Naive thymus-derived CD4-positive, alpha-beta T cell (primary cell): ENCODE measurements at regions of chr13 and their contacts with region 1.

Region 1: GRCh38 chr13:29935309-29935981 is 85.0 kb upstream of the UBL3 start:
- DNase-seq: peak; percentile 38 to 84 (median 77)
- ATAC-seq: peak; percentile 93
- H3K4me3 ChIP-seq: peak overlapping the region; percentile 61
- H3K4me3 Mint-ChIP-seq: peak overlapping the region; percentile 67 to 95 (median 91)
- H3K27ac ChIP-seq: peak overlapping the region; percentile 71
- H3K27ac Mint-ChIP-seq: peak overlapping the region; percentile 81 to 96 (median 93)
- H3K4me1 ChIP-seq: peaks cover 38 to 43% of the 10 kb centered on the region in 2 donors
- H3K4me1 Mint-ChIP-seq: peaks cover 32 to 53% (median 51%) of the 10 kb centered on the region in 7 donors
- H3K27me3 ChIP-seq: no peaks in the 10 kb centered on the region
- H3K27me3 Mint-ChIP-seq: no peaks in the 10 kb centered on the region

Region 2: GRCh38 chr13:29508130-29508875 is 427.1 kb before region 1 on chr13:
- CTCF ChIA-PET with region 1: no interaction called
- POLR2A ChIA-PET with region 1: no interaction called
- intact Hi-C with region 1: loop called in 1 of 2 experiments (anchors 5 kb)
- DNase-seq: peak; percentile 32 to 74 (median 61)
- ATAC-seq: peak; percentile 76
- H3K4me3 ChIP-seq: no peak overlapping the region
- H3K4me3 Mint-ChIP-seq: no peak overlapping the region
- H3K27ac ChIP-seq: no peak overlapping the region
- H3K27ac Mint-ChIP-seq: peak overlapping the region in 1 of 9 donors; percentile 21
- H3K4me1 ChIP-seq: no peaks in the 10 kb centered on the region
- H3K4me1 Mint-ChIP-seq: peaks cover 0 to 2% (median under 1%) of the 10 kb centered on the region in 7 donors
- H3K27me3 ChIP-seq: no peaks in the 10 kb centered on the region
- H3K27me3 Mint-ChIP-seq: peaks cover 3 to 6% (median 5%) of the 10 kb centered on the region in 5 donors

Region 3: DNA sequence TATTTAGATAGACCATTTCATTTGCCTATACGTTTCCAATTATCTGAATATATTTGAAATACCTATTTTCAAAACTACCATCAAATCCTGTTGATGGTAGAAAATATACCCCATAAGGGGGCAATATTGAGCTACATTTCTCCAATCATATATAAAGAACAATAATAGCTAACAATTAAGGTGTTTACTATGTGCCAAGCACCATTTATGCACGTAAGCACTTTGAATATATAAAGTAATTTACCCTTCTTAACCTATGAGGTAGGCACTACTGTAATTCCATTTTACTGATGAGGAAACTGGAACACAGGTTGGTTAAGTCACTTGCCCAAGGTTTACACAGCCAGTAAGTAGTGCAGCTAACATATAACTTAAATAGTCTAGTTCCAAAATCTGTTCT is 164.2 kb before region 1 on chr13:
- CTCF ChIA-PET with region 1: interaction called, 39 read pairs
- POLR2A ChIA-PET with region 1: no interaction called
- intact Hi-C with region 1: loop called in 1 of 2 experiments (anchors 1 kb)
- DNase-seq: peak in 7 of 9 donors; percentile 31 to 67 (median 52)
- ATAC-seq: peak; percentile 77
- H3K4me3 ChIP-seq: no peak overlapping the region
- H3K4me3 Mint-ChIP-seq: no peak overlapping the region
- H3K27ac ChIP-seq: no peak overlapping the region
- H3K27ac Mint-ChIP-seq: peak overlapping the region in 1 of 9 donors; percentile 11
- H3K4me1 ChIP-seq: no peaks in the 10 kb centered on the region
- H3K4me1 Mint-ChIP-seq: peaks cover 0 to 14% (median 4%) of the 10 kb centered on the region in 7 donors
- H3K27me3 ChIP-seq: no peaks in the 10 kb centered on the region
- H3K27me3 Mint-ChIP-seq: no peaks in the 10 kb centered on the region

Region 4: DNA sequence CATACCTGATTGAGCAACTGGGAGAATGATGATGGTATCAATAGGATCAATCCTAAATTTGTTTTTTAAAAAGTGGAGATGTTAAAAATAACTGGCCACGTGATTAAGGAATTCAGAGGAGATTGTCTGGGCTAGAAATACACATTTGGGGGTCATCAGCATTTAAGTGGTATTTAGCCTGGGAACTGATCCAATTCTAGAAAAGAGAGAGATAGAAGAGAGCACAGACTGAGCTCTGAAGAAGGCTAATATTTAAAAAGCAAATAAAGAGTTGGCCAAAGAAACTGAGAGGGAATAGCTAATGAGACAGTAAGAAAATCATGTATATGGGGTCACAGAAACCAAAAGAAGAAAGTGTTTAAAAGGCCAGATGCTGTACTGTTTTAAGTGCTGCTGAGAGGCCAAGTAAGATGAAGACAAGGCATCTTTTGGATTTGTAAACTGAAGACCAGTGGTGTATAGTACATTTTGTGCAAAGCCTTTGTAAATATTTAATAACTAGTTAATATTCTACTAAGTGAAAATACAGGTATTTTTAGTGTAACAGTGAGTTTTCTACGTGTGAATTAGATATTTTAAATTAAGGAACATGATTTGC is 125.2 kb before region 1 on chr13:
- CTCF ChIA-PET with region 1: no interaction called
- POLR2A ChIA-PET with region 1: no interaction called
- intact Hi-C with region 1: no loop called
- DNase-seq: no peak
- ATAC-seq: no peak
- H3K4me3 ChIP-seq: no peak overlapping the region
- H3K4me3 Mint-ChIP-seq: peak overlapping the region in 2 of 10 donors; percentile 10 to 51
- H3K27ac ChIP-seq: no peak overlapping the region
- H3K27ac Mint-ChIP-seq: no peak overlapping the region
- H3K4me1 ChIP-seq: peaks cover 0 to 8% of the 10 kb centered on the region in 2 donors
- H3K4me1 Mint-ChIP-seq: peaks cover 0 to 87% (median 58%) of the 10 kb centered on the region in 7 donors
- H3K27me3 ChIP-seq: no peaks in the 10 kb centered on the region
- H3K27me3 Mint-ChIP-seq: no peaks in the 10 kb centered on the region

Region 5: DNA sequence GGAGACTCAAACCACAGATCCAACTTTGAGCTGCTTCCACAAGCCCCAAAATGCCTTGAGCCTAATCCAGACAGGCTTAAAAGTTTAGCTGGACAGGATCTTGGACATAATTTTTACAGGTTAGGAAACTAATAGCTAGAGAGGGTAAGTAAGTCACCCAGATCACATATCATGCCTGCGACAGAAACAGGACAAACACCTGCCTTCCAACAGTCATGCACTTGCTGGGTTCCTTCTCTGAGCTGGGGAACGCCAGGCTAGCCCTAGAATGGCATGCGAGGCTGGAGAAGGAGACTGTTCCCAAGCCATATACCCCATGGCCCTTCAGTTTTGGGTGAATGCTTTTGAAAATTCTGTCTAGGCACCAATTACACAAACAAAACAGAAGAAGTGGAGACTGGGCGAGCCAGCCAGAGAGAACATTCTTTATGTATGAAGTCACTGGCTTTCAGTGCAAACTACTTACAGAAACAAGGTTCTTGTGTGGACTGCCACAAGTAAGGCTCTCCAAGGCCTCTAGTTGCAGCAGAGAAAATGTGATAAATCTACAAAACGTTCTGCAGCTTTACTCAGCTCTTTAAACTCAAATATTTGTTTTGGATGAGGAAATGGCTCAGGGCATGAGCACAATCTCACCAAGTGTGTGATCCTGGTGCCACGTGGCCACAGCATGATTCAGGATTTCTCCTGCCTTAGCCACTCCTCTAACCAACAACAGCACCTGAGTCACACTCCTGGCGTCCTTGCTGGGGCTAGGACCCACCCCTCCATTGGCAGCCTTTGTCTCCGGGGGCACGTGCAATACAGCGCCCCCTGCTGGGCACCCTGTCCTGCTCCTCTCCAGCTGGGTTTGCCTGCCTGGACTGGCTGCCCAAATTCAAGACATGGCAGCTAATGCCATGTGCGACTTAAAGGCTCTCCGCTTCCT is 11.6 kb before region 1 on chr13:
- CTCF ChIA-PET with region 1: interaction called, 35 read pairs
- POLR2A ChIA-PET with region 1: interaction called, 10 read pairs
- intact Hi-C with region 1: no loop called
- DNase-seq: peak in 5 of 9 donors; percentile 20 to 55 (median 21)
- ATAC-seq: peak; percentile 86
- H3K4me3 ChIP-seq: no peak overlapping the region
- H3K4me3 Mint-ChIP-seq: no peak overlapping the region
- H3K27ac ChIP-seq: no peak overlapping the region
- H3K27ac Mint-ChIP-seq: peak overlapping the region in 1 of 9 donors; percentile 32
- H3K4me1 ChIP-seq: no peaks in the 10 kb centered on the region
- H3K4me1 Mint-ChIP-seq: peaks cover 0 to 36% (median 13%) of the 10 kb centered on the region in 7 donors
- H3K27me3 ChIP-seq: no peaks in the 10 kb centered on the region
- H3K27me3 Mint-ChIP-seq: peaks cover 0 to 3% (median under 1%) of the 10 kb centered on the region in 5 donors

Region 6: GRCh38 chr13:29970096-29970495 is 34.7 kb after region 1 on chr13:
- CTCF ChIA-PET with region 1: no interaction called
- POLR2A ChIA-PET with region 1: no interaction called
- intact Hi-C with region 1: loop called (anchors 5 kb)
- DNase-seq: no peak
- ATAC-seq: no peak
- H3K4me3 ChIP-seq: no peak overlapping the region
- H3K4me3 Mint-ChIP-seq: no peak overlapping the region
- H3K27ac ChIP-seq: no peak overlapping the region
- H3K27ac Mint-ChIP-seq: no peak overlapping the region
- H3K4me1 ChIP-seq: no peaks in the 10 kb centered on the region
- H3K4me1 Mint-ChIP-seq: peaks cover 0 to 9% (median 0%) of the 10 kb centered on the region in 7 donors
- H3K27me3 ChIP-seq: no peaks in the 10 kb centered on the region
- H3K27me3 Mint-ChIP-seq: peaks cover 0 to 18% (median 0%) of the 10 kb centered on the region in 5 donors

Region 7: GRCh38 chr13:30165796-30166195 is 230.4 kb after region 1 on chr13:
- CTCF ChIA-PET with region 1: no interaction called
- POLR2A ChIA-PET with region 1: no interaction called
- intact Hi-C with region 1: no loop called
- DNase-seq: no peak
- ATAC-seq: no peak
- H3K4me3 ChIP-seq: no peak overlapping the region
- H3K4me3 Mint-ChIP-seq: no peak overlapping the region
- H3K27ac ChIP-seq: no peak overlapping the region
- H3K27ac Mint-ChIP-seq: no peak overlapping the region
- H3K4me1 ChIP-seq: peaks cover 0 to 8% of the 10 kb centered on the region in 2 donors
- H3K4me1 Mint-ChIP-seq: peaks cover 6 to 25% (median 21%) of the 10 kb centered on the region in 7 donors
- H3K27me3 ChIP-seq: no peaks in the 10 kb centered on the region
- H3K27me3 Mint-ChIP-seq: peaks cover 0 to 10% (median 0%) of the 10 kb centered on the region in 5 donors